G401 (cell line): ENCODE measurements at regions of chr17 and their contacts with region 1.

Region 1: DNA sequence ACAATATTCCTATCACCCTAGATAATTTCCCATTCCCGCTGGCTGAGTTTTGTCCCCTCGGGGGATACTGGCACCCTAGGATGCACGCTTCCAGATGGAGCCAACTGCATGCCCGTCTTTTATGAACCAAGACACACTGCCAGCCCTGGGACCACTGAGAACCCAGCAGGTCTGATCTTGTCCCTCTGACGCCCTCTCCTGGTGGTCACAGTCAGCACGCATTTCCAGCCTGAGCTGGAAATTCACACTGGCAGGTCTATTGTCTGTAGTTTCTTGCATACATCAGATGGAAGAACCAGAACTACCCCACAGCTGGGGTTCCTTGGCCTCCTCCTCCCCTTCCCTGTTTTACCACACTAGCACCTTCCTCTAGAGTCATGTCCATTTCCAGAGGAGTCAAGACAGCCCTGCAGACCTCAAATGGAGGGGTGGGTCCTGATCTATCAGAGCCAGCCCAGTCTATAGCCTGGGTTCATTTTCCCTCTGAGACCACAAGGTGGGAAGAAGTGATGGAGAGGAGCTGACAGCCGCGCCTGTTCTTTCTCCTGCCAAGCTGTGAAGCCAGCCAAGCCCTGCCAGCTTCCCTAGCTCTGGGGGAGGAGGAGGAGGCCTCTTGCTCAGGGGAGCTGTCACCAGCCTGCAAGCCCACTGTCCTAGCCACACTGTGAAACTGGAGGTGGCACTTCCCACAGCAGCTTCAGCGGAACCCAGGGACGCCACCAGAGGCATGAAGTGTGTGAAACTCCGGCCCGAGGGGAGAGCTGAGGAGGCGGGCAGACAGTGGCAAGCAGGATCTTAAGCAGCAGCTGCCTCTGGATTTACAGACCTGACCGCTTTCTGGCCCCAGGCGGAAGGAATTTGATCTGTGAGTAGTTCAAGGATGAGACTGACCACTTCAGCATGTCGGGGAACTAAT is 29.3 kb downstream of the MXRA7 start:
- DNase-seq: peak; percentile 85

Region 2: DNA sequence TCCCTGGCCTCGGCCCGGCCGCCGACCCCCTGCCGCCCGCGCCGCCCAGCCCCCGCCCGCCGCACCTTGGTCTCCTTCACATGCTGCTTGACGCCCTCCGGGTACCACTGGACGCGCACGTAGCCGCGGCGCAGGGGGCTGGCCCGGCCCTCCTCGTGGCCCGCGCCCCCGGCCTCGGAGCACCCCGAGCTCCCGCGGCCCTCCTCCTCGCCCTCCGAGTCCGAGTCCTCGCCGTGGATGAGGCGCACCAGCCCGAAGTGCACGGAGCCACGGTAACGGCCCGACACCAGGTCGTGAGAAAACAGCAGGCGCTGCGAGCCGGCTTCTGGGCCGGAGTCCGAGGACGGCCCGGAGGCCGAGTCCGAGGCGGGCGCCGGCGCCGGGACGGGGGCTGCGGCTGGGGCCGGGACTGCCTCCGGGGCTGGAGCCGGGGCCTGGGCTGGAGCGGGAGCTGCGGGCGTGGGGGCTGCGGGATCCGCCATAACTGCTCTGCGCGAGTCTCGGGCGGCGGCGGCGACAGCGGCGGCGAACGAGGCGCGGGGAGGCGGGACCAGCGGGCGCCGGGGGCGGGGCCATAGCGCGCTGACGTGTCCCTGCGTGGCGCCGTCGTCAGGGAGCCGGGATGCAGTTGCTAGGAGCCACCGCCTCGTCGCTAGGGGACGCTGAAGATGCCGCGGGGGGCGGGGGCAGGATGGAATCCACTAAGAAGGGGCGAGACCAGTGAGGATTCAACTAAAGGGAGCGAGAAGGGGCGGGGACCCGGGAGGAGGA is 228.6 kb before region 1 on chr17 and contains the start of gene UBE2O:
- in situ Hi-C with region 1: loop called (anchors 25 kb)
- DNase-seq: peak; percentile 84
- total RNA-seq, gene UBE2O: 30.5 and 34.9 TPM in 2 replicates